ENCODE measurements at regions of chr16 and their contacts with region 1.

Region 1: DNA sequence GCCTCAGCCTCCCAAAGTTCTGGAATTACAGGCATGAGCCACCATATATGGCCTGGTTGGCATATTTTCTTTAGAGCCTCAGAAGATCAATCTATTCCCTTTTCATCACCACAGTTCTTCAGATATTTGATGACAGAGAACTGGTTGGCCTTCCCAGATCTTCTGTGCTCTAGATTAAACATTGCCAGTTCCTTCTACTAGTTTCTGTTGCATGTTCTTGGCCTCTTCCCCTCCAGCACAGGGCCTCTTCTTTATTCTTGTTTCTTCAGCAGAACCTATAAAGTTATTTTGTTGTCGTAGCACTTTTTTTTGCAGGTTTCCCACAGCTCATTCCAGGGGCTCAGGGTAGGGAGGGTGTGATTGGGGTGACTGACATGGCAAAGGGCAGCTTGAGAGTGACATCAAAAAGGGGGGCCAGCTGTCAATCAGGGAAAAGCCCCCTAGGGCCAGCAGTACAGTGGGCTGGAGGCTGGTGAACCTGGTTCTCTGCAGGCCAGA is 9.3 kb downstream of the CHD9 start:
- DNase-seq: no peak
- ATAC-seq: no peak
- H3K4me3 ChIP-seq: no peak overlapping the region
- H3K27ac ChIP-seq: no peak overlapping the region
- H3K4me1 ChIP-seq: no peaks in the 10 kb centered on the region
- H3K27me3 ChIP-seq: no peaks in the 10 kb centered on the region
- CTCF ChIP-seq: no peak

Region 2: GRCh38 chr16:53249331-53249730 is 185.2 kb after region 1 on chr16:
- CTCF ChIA-PET with region 1: interaction called, 10 read pairs
- POLR2A ChIA-PET with region 1: no interaction called
- intact Hi-C with region 1: no loop called
- DNase-seq: no peak
- ATAC-seq: no peak
- H3K4me3 ChIP-seq: no peak overlapping the region
- H3K27ac ChIP-seq: no peak overlapping the region
- H3K4me1 ChIP-seq: no peaks in the 10 kb centered on the region
- H3K27me3 ChIP-seq: no peaks in the 10 kb centered on the region
- CTCF ChIP-seq: no peak

Measured in PC-3 (cell line).